ENCODE measurements at regions of chr4 and their contacts with region 1.

Region 1: GRCh38 chr4:24419181-24420034 is 164.9 kb downstream of the DHX15 start:
- DNase-seq: peak; percentile 84

Region 2: GRCh38 chr4:23368081-23368697 is 1051.2 kb before region 1 on chr4:
- intact Hi-C with region 1: loop called (anchors 5 kb)
- DNase-seq: no peak

Region 3: DNA sequence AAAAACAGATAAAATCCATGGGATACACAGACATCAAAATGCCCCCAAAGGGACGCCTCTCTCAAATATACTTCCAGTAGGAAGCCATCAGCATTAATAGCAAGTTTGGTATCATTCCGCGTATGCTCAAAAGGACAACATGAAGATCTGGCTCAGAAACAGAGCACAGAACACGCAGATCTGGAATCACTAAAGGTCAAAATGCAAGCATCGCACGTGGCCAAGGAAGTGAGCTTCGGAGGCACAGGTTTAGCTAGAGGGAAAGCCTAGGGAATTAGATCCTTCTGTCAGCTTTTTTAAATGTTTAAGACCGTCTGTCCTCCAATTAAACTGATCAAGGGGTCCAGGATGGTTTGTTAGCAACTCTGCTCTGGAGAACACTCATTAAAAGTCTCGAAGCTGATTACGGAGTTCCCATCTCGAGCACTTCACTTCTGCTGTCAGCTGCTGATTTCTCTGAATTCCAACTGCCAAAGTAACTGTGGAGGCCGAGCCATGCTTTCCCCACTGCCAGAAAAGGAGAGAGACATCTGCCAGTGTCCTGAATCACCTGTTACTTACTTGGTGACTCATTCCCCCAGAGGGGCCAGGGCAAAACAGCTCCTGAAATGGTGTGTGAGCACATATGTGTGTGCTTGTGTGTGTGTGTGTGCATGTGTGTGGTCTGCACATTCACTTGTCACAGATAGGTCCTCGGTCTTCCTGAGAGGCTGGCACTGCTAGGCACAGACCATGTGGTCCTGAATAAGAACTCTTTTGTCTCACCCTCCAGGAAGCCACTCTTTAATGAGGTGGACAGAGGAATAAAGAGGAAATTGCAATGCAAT is 351.8 kb before region 1 on chr4:
- intact Hi-C with region 1: loop called (anchors 10 kb)
- DNase-seq: no peak

Region 4: GRCh38 chr4:24244663-24245490 is 174.5 kb before region 1 on chr4:
- intact Hi-C with region 1: loop called (anchors 5 kb)
- DNase-seq: peak; percentile 80

Region 5: GRCh38 chr4:24607334-24607733 is 187.9 kb after region 1 on chr4:
- intact Hi-C with region 1: no loop called
- DNase-seq: no peak

Region 6: GRCh38 chr4:24686871-24687680 is 267.7 kb after region 1 on chr4:
- intact Hi-C with region 1: no loop called
- DNase-seq: no peak